Panc1 (cell line): ENCODE measurements at regions of chr1 and their contacts with region 1.

Region 1: GRCh38 chr1:115138968-115139367 is 49.7 kb upstream of the TSPAN2 start:
- DNase-seq: peak; percentile 41
- ATAC-seq: peak; percentile 99
- H3K4me3 ChIP-seq: no peak overlapping the region
- H3K27ac ChIP-seq: no peak overlapping the region
- H3K4me1 ChIP-seq: no peaks in the 10 kb centered on the region
- H3K27me3 ChIP-seq: no peaks in the 10 kb centered on the region
- CTCF ChIP-seq: peak; percentile 87

Region 2: DNA sequence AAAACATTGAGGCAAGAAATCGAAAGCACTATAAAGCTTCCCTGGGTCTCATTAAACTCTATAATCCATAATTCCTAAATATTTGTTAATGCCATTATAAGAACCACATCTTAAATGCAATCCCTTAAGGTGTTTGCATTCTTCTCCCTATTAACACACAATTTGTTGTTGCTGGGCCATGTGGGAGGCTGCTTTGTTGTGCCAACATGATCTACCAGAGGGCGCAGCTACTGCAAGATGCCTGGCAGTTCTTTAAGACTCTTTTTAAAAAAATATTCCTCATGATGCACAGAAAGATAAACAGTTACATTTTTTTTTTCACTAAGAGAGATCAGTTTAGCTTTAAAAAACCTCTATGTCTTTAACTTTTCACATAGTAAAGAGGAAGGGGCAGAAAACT is 518.5 kb before region 1 on chr1:
- CTCF ChIA-PET with region 1: interaction called, 11 read pairs
- POLR2A ChIA-PET with region 1: no interaction called
- in situ Hi-C with region 1: no loop called
- intact Hi-C with region 1: no loop called
- DNase-seq: no peak
- ATAC-seq: no peak
- H3K4me3 ChIP-seq: no peak overlapping the region
- H3K27ac ChIP-seq: no peak overlapping the region
- H3K4me1 ChIP-seq: no peaks in the 10 kb centered on the region
- H3K27me3 ChIP-seq: no peaks in the 10 kb centered on the region
- CTCF ChIP-seq: no peak; the same call in 1 of the 2 replicates

Region 3: DNA sequence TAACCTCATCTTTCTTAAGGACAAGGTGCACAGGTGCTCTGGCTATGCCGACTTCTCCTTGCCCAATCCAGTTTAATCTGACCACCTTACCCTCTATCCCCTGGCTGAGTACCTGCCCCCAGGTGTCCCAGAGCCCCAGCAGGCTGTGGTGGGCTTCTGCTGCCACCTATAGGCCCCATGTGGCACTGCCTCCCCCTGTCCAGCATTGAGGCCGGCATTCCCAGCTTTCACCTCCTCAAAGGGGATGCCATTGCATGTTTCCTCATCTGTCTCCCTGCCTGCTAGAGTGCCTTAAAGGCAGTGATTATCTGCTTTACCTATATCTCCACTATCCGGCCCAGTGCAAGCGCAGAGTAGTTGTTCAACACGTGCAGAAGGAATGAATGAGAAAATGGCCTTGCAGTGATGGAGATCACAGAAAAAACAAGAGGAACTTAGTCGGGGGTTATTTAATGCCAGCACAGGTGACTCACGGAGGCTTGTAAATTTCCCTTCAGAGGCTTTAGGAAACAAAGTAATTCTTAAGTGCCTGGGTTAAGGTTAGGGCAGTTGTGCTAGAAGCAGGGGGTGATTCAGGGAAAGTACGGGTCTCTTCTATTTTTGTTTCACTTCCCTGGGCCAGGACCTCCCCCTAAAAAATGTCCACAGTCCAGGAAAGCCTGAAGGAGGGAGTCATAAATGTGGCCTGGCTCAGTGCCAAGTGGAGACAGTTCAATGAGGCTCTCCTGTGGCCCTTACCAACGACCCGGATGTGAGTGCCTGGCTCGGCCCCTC is 330.9 kb after region 1 on chr1:
- CTCF ChIA-PET with region 1: interaction called, 5 read pairs
- POLR2A ChIA-PET with region 1: no interaction called
- in situ Hi-C with region 1: no loop called
- intact Hi-C with region 1: loop called (anchors 1 kb)
- DNase-seq: peak; percentile 8
- ATAC-seq: peak; percentile 80
- H3K4me3 ChIP-seq: no peak overlapping the region
- H3K27ac ChIP-seq: no peak overlapping the region
- H3K4me1 ChIP-seq: no peaks in the 10 kb centered on the region
- H3K27me3 ChIP-seq: no peaks in the 10 kb centered on the region
- CTCF ChIP-seq: peak; percentile 87

Region 4: DNA sequence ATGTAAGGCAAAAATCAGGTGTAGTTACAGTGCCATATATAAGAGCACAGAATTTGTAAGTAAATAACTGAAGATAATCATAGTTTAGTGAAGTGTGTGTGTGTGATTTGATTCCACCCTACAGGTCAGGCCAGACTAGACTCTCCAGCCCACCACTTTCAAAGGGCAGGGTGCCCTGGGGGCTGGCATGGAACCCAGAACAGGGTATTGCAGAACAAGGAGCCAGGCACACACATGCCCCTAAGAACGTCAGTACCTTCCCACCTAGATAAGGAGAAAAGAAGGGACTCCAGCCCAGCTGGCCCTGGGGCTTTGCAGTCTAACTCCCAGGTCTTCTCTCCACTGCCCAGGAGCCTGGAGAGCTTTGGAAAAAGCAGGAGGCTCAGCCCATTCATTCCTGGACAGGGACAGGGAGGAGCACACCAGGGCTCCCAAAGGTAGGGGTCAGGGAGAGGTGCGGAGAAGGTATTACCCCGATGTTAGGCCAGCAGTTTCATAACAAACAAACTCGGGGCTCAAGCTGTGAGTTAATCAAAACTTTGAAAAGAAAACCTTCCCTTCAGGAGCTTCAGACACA is 353.1 kb after region 1 on chr1:
- CTCF ChIA-PET with region 1: no interaction called
- POLR2A ChIA-PET with region 1: no interaction called
- in situ Hi-C with region 1: no loop called
- intact Hi-C with region 1: no loop called
- DNase-seq: no peak
- ATAC-seq: no peak
- H3K4me3 ChIP-seq: no peak overlapping the region
- H3K27ac ChIP-seq: no peak overlapping the region
- H3K4me1 ChIP-seq: no peaks in the 10 kb centered on the region
- H3K27me3 ChIP-seq: no peaks in the 10 kb centered on the region
- CTCF ChIP-seq: no peak

Region 5: DNA sequence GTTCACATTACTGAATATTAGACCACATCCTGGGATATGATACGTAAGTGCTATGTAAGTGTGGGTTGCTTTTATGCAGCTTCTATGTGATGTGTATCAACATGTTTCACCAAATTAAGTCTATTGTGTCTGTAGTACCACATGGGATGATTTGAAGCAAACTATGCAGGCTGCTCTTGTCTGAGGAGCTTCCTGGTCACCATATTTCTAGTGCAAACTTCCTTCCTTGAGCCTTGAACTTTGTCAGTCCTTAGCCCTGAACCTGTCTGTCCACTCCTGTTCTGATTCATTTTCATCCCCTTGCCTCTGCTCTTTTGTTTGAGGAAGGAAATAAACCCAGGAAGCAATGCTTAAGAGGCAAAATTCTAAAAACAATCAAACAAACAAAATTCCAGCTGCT is 385.3 kb after region 1 on chr1:
- CTCF ChIA-PET with region 1: no interaction called
- POLR2A ChIA-PET with region 1: no interaction called
- in situ Hi-C with region 1: no loop called
- intact Hi-C with region 1: no loop called
- DNase-seq: no peak
- ATAC-seq: no peak
- H3K4me3 ChIP-seq: no peak overlapping the region
- H3K27ac ChIP-seq: no peak overlapping the region
- H3K4me1 ChIP-seq: no peaks in the 10 kb centered on the region
- H3K27me3 ChIP-seq: no peaks in the 10 kb centered on the region
- CTCF ChIP-seq: no peak

Region 6: DNA sequence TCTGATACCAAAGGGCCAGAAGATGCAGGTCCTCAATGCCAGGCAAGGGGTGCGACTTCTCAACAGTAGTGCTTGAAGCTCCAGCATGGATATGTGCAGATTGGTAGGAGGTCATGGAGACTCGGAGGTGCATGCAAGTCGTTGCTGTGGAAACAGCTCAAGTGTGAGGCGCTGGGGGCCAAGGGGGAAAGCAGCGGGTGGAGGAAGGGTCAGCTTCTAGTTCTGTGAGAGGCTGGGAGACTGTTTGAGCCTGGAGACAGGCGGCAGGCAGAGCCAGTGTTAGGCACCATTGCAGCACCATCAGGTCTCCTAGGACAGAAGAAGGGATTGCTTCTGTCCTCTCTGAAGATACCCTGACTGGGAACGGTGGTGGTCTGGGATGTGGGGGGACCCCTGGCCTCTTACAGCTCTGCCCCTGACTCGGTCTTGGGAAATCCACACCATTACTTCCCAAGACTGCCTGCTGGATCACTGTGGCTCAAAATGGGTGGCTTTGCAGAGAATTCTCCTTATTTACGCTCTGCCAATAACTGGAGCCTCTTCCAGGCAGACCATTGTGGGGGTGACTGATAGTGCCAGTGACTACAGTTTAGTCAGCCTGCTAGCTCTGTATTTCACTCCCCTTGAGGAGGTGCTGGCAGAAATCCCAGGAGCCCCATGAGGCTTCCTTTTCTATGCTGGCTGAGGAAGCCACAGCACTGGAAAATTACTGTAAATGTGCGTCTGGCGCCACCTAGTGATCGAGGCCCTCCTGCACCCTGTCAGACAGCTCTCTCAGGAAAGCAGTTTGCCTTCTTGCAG is 456.5 kb after region 1 on chr1:
- CTCF ChIA-PET with region 1: interaction called, 5 read pairs
- POLR2A ChIA-PET with region 1: no interaction called
- in situ Hi-C with region 1: no loop called
- intact Hi-C with region 1: loop called (anchors 5 kb)
- DNase-seq: peak; percentile 54
- ATAC-seq: peak; percentile 95
- H3K4me3 ChIP-seq: no peak overlapping the region
- H3K27ac ChIP-seq: no peak overlapping the region
- H3K4me1 ChIP-seq: no peaks in the 10 kb centered on the region
- H3K27me3 ChIP-seq: no peaks in the 10 kb centered on the region
- CTCF ChIP-seq: peak; percentile 85

Region 7: GRCh38 chr1:115771847-115772457 is 633.0 kb after region 1 on chr1:
- CTCF ChIA-PET with region 1: no interaction called
- POLR2A ChIA-PET with region 1: no interaction called
- in situ Hi-C with region 1: no loop called
- intact Hi-C with region 1: loop called (anchors 5 kb)
- DNase-seq: peak; percentile 54
- ATAC-seq: peak; percentile 96
- H3K4me3 ChIP-seq: peak overlapping the region in 1 of 2 experiments; percentile 24; a peak in 1 of 4 replicates
- H3K27ac ChIP-seq: no peak overlapping the region
- H3K4me1 ChIP-seq: no peaks in the 10 kb centered on the region
- H3K27me3 ChIP-seq: peaks cover 3% of the 10 kb centered on the region; the same call in 1 of the 2 replicates
- CTCF ChIP-seq: peak; percentile 73